Activated CD8-positive, alpha-beta T cell treated with anti-CD3 and anti-CD28 coated beads, Interleukin-2, amount 10 ng/mL, durations not matched to agents 7 days and 5 days (primary cell): ENCODE measurements at regions of chr14 and their contacts with region 1.

Region 1: DNA sequence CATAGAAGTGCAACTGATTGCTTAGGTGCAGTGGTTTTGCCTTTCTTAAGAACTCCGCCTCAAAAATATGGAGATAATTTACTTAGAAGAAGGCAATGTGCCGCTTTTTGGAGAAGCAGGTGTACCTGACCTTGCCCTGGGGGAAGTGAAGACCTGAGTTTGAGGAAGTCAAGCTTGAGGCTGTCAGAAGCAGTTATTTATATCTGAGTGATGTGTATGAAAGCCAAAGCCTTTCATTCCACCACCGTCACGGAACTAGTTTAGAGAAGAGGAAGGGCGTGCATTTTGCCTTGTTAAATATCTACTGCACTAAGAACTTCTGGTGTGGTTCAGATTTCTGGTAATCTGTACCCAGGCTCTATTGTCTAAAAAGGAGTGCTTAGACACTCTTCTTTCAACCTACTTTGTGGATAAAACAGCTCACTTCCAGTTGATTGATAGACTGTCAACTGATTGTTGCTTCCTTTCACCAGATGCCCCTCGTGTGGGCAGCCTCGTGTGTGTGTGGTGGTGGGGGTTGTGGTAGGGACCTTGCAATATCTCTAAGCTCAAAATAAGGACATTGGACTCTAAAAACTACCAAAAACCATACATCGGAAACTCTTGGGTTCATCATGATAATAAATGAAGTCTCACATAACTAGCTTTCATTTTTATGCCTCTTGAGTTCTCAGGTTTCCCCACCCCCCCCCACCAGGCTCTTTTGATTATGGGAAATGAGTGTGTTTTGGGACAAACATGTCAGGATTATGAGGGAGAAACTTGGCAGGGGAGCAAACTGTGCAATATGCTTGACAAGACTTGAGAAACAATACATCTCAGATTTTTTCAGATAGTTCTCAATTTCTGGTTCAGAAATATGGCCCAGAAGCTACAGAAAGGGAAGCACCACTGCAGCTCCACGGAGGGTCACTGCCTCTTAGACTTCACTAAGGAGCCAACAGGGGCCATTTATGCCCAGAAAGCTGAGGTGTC is 78.6 kb downstream of the ARF6 start:
- DNase-seq: peak; percentile 79
- ATAC-seq: peak; percentile 79
- H3K4me3 Mint-ChIP-seq: peak overlapping the region; percentile 70
- H3K27ac Mint-ChIP-seq: peak overlapping the region; percentile 96
- H3K4me1 Mint-ChIP-seq: peaks cover 65% of the 10 kb centered on the region
- H3K27me3 Mint-ChIP-seq: no peaks in the 10 kb centered on the region

Region 2: DNA sequence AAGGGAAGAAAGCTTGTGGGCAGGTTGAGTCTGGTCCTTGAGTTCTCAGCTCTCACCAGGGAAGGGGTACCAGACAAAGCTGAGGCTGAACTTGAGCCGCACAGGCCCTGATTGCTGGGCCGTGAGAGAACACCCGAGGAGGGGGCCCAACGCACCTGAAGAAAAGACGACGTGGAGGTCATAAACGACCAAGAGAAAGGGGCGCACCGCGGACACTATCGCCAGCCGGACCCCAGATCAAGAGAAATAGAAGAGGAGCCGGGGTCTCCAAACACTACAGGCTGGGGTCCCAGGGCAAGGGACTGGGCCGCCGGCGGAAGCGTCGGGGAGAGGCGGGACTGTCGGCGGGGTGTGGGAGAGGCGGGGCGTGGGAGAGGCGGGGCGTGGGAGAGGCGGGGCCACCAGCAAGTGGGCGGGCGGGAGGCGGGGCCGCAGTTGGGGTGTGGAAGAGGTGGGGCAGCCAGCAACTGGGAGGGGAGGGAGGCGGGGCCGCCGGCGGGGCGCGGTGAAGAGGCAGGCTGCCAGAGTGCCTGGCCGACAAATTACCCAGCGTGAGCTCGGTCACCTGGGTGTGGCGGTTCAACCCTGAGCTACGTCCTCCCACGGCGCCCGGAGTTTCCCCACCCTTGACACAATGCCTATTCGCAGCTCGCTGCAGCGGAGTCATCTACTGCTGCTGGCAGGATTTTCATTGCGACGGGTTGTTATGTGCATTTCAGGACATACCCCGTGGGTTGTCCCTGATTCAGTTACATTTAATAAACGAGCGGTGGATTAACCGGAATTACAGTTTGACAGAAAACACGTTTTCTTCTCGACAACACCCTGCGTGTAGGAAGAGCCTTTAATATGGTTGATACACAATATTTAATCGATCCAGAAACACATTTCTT is 103.4 kb before region 1 on chr14:
- CTCF ChIA-PET with region 1: interaction called, 36 read pairs
- POLR2A ChIA-PET with region 1: interaction called, 59 read pairs
- DNase-seq: peak; percentile 99
- ATAC-seq: peak; percentile 91
- H3K4me3 Mint-ChIP-seq: peak overlapping the region; percentile 91
- H3K27ac Mint-ChIP-seq: peak overlapping the region; percentile 96
- H3K4me1 Mint-ChIP-seq: peaks cover 21% of the 10 kb centered on the region
- H3K27me3 Mint-ChIP-seq: no peaks in the 10 kb centered on the region

Region 3: GRCh38 chr14:49892636-49893308 is 78.7 kb before region 1 on chr14 and contains the start of gene ARF6:
- CTCF ChIA-PET with region 1: interaction called, 8 read pairs
- POLR2A ChIA-PET with region 1: interaction called, 28 read pairs
- DNase-seq: peak; percentile 98
- ATAC-seq: peak; percentile 89
- H3K4me3 Mint-ChIP-seq: peak within 1 kb of the TSS; percentile 90
- H3K27ac Mint-ChIP-seq: peak within 1 kb of the TSS; percentile 97
- H3K4me1 Mint-ChIP-seq: peaks cover 17% of the 10 kb centered on the region
- H3K27me3 Mint-ChIP-seq: no peaks in the 10 kb centered on the region
- total RNA-seq, gene ARF6: 183 to 193 TPM

Region 4: GRCh38 chr14:49946320-49947141 is 24.9 kb before region 1 on chr14:
- CTCF ChIA-PET with region 1: interaction called, 27 read pairs
- POLR2A ChIA-PET with region 1: interaction called, 56 read pairs
- DNase-seq: peak; percentile 37
- ATAC-seq: peak; percentile 52
- H3K4me3 Mint-ChIP-seq: peak overlapping the region; percentile 44
- H3K27ac Mint-ChIP-seq: peak overlapping the region; percentile 93
- H3K4me1 Mint-ChIP-seq: peaks cover 82% of the 10 kb centered on the region
- H3K27me3 Mint-ChIP-seq: no peaks in the 10 kb centered on the region

Region 5: GRCh38 chr14:50045039-50045711 is 73.7 kb after region 1 on chr14:
- CTCF ChIA-PET with region 1: no interaction called
- POLR2A ChIA-PET with region 1: interaction called, 27 read pairs
- DNase-seq: peak; percentile 91
- ATAC-seq: peak; percentile 84
- H3K4me3 Mint-ChIP-seq: peak overlapping the region; percentile 13
- H3K27ac Mint-ChIP-seq: peak overlapping the region; percentile 89
- H3K4me1 Mint-ChIP-seq: peaks cover 75% of the 10 kb centered on the region
- H3K27me3 Mint-ChIP-seq: no peaks in the 10 kb centered on the region